Activated B cell treated with CpG ODN at 0.5 μM for 24 hours (primary cell): ENCODE measurements at regions of chr12 and their contacts with region 1.

Region 1: GRCh38 chr12:49567611-49568441 is at the start of gene MCRS1:
- DNase-seq: peak; percentile 80
- ATAC-seq: peak; percentile 88
- H3K4me3 Mint-ChIP-seq: peak within 1 kb of the TSS; percentile 97
- H3K27ac Mint-ChIP-seq: peak within 1 kb of the TSS; percentile 100
- H3K4me1 Mint-ChIP-seq: peaks cover 30% of the 10 kb centered on the region
- H3K27me3 Mint-ChIP-seq: no peaks in the 10 kb centered on the region
- CTCF ChIP-seq: no peak
- total RNA-seq, gene MCRS1: 82.2 and 84.2 TPM in 2 replicates

Region 2: DNA sequence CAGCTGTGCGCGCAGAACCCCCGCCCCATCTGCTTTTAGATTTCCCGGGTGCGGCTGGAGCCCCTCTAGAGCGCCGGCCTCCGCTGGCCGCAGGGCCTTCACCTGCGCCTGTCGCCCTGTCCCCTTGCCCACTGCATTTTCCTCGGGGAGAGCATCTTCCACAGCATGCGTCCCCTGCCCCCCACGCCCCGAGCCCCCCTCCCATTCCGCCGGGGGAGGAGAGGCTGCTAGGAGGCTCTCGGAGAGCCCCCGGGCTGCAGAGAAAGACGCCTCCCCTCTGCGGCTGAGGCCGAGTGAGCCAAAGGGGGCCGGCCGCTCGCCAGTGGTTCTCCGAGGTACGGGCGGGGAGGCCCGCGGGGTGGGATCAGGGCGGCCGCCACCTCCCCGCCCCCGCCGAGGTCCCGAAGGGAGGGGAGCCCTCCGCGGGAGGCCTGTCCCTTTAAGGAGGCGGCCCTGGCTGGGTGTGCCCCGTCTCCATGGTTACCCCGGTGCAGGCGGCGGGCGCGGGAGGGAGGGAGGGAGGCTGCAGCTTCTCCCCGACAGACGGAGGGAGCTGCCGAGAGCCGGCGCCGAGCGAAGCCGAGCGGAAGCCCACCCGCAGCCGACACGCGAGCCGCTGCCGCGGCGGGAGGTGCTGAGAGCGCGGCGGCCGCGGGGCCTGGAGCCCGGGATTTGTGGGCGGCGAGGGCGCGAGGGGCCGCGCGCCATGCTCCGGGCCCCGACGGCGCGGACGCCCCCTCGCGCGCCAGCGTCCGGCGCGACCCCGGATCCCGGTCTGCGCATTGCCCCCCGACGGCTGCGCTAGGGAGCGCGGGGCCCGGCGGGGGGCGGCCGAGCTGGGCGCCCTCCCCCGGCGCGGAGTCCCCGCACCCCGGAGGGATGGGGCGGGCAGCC is 29.1 kb before region 1 on chr12 and contains the start of gene KCNH3:
- CTCF ChIA-PET with region 1: no interaction called
- POLR2A ChIA-PET with region 1: interaction called, 4 read pairs
- intact Hi-C with region 1: loop called (anchors 2 kb)
- DNase-seq: peak; percentile 63
- ATAC-seq: peak; percentile 86
- H3K4me3 Mint-ChIP-seq: peak within 1 kb of the TSS; percentile 79
- H3K27ac Mint-ChIP-seq: no peak within 1 kb of the TSS
- H3K4me1 Mint-ChIP-seq: peaks cover 43% of the 10 kb centered on the region
- H3K27me3 Mint-ChIP-seq: peaks cover 28% of the 10 kb centered on the region
- CTCF ChIP-seq: no peak
- total RNA-seq, gene KCNH3: 0.27 and 0.44 TPM in 2 replicates

Region 3: DNA sequence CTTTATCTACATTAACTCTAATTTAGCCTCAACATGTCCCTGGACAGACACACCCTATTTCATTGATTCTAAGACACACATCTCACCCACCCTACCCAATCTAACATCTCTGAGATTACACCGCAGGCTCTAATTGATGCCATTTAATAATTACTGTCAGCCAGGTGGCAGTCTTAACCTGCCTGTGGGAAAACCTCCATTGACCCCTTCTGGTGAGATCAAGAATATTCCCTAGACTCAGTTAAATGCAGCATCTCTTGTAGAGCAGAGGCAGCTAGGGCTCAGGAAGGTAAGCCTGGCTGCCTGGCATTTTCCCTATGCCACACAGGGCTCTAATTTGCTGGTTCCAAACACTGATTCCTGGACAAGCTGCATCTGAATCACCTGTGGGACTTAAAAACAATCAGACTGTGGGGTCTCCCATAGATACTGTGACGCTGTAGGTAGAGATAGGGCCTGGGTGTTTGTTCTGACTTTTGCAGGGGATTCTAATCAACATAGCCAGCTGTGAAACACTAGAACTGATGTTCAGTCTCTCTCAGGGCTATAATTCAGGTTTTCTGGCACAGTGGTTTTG is 14.2 kb before region 1 on chr12:
- CTCF ChIA-PET with region 1: interaction called, 3 read pairs
- POLR2A ChIA-PET with region 1: interaction called, 11 read pairs
- intact Hi-C with region 1: no loop called
- DNase-seq: no peak
- ATAC-seq: peak; percentile 65
- H3K4me3 Mint-ChIP-seq: no peak overlapping the region
- H3K27ac Mint-ChIP-seq: no peak overlapping the region
- H3K4me1 Mint-ChIP-seq: peaks cover 4% of the 10 kb centered on the region
- H3K27me3 Mint-ChIP-seq: peaks cover 13% of the 10 kb centered on the region
- CTCF ChIP-seq: no peak

Region 4: GRCh38 chr12:49828133-49829091 is 260.6 kb after region 1 on chr12 and contains the start of gene NCKAP5L:
- CTCF ChIA-PET with region 1: no interaction called
- POLR2A ChIA-PET with region 1: interaction called, 3 read pairs
- intact Hi-C with region 1: loop called (anchors 10 kb)
- DNase-seq: peak; percentile 87
- ATAC-seq: peak; percentile 97
- H3K4me3 Mint-ChIP-seq: peak within 1 kb of the TSS; percentile 98
- H3K27ac Mint-ChIP-seq: peak within 1 kb of the TSS; percentile 95
- H3K4me1 Mint-ChIP-seq: peaks cover 37% of the 10 kb centered on the region
- H3K27me3 Mint-ChIP-seq: no peaks in the 10 kb centered on the region
- CTCF ChIP-seq: no peak
- total RNA-seq, gene NCKAP5L: 7.2 and 9.1 TPM in 2 replicates